T-cell (primary cell): ENCODE measurements at regions of chr13 and their contacts with region 1.

Region 1: GRCh38 chr13:32515246-32515645 is 23.3 kb downstream of the N4BP2L2 start:
- DNase-seq: no peak
- ATAC-seq: no peak
- H3K4me3 ChIP-seq: no peak overlapping the region
- H3K4me3 Mint-ChIP-seq: no peak overlapping the region
- H3K27ac ChIP-seq: no peak overlapping the region
- H3K27ac Mint-ChIP-seq: no peak overlapping the region
- H3K4me1 ChIP-seq: no peaks in the 10 kb centered on the region
- H3K4me1 Mint-ChIP-seq: peaks cover 15 to 20% (median 17%) of the 10 kb centered on the region in 3 donors
- H3K27me3 ChIP-seq: no peaks in the 10 kb centered on the region
- H3K27me3 Mint-ChIP-seq: no peaks in the 10 kb centered on the region

Region 2: DNA sequence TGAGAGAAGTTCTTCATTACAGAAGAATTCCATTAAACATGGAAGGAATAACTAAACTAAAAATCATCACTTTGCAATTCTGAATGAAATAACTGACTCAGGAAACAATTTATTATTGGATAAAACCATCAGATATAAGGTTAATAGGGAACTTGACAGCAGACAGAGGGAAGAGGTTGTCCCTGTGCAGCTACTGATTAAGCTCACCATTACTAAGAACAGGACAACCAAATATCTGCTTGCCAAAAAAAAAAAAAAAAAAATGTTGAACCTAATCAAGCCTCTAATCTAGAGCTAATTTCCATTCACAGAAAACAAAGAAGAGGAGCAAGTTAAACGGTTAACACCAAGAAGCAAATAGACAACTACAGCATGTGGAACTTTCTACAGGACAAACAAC is 10.5 kb after region 1 on chr13:
- CTCF ChIA-PET with region 1: interaction called, 4 read pairs
- POLR2A ChIA-PET with region 1: interaction called, 3 to 13 read pairs
- DNase-seq: no peak
- ATAC-seq: no peak
- H3K4me3 ChIP-seq: no peak overlapping the region
- H3K4me3 Mint-ChIP-seq: no peak overlapping the region
- H3K27ac ChIP-seq: no peak overlapping the region
- H3K27ac Mint-ChIP-seq: no peak overlapping the region
- H3K4me1 ChIP-seq: peaks cover 7 to 10% of the 10 kb centered on the region in 2 experiments
- H3K4me1 Mint-ChIP-seq: peaks cover 45 to 64% (median 60%) of the 10 kb centered on the region in 3 donors
- H3K27me3 ChIP-seq: no peaks in the 10 kb centered on the region
- H3K27me3 Mint-ChIP-seq: no peaks in the 10 kb centered on the region